Activated naive CD4-positive, alpha-beta T cell treated with anti-CD3 and anti-CD28 coated beads for 36 hours (primary cell): ENCODE measurements at regions of chr5 and their contacts with region 1.

Region 1: DNA sequence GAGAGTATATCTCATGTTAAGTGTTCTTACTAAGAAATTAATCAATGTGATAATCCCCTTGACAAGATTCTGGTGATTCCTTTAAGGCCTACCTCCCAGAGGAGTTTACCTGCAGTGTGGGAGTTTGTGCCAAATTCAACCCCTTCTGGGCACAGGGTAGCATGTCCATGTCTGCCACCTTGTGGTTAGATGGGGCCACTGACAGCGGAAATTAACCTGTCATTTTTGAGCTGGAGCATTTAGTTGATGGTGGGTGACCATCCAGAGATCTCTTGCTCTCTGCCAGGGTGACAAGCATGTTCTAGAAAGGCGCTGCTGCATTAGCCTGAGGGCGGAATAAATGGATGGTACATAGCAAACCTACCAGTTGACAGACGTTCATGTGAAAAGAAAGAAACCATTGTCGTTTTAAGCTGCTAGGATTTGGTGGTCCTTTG is 132.2 kb downstream of the FBXO4 start:
- DNase-seq: peak; percentile 69
- H3K4me3 Mint-ChIP-seq: no peak overlapping the region
- H3K27ac Mint-ChIP-seq: no peak overlapping the region
- H3K4me1 Mint-ChIP-seq: no peaks in the 10 kb centered on the region
- H3K27me3 Mint-ChIP-seq: no peaks in the 10 kb centered on the region

Region 2: DNA sequence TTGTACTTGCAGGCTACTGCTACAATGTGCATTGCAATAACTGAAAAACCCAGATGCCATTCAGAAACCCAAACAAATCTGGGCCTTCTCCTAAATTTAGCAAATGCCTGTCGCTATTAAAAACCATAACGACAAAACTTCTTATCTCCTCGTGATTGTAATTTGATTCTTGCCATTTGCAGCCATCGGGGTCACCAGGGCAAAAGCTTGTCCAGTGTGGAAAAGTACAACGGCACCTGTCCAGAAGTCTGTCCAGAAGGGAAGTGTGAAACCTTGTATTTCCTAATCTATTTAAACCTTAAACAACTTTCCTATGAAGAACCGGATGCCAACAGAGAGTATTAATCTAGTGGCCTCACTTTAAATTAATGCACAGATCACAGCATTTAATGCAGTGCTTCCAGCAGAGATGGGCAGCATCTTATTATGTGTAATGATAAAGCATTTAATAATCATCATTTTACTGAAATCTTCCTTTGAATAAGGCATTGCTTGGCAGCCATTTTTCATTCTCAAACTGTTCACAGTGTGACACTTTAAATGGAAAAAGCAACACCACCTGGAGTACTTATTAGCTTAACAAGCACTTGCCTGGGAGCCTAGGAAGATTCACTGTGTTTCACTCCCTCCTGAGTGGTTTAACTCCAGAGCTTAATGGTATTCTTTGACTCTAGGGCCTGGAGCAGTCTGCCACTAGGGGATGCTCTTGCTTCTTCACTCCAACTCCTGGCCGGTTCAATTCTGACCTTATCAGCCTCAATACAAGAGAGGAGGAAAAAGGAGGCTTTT is 1152.9 kb before region 1 on chr5:
- CTCF ChIA-PET with region 1: no interaction called
- intact Hi-C with region 1: loop called (anchors 5 kb)
- DNase-seq: peak; percentile 62
- H3K4me3 Mint-ChIP-seq: no peak overlapping the region
- H3K27ac Mint-ChIP-seq: no peak overlapping the region
- H3K4me1 Mint-ChIP-seq: no peaks in the 10 kb centered on the region
- H3K27me3 Mint-ChIP-seq: no peaks in the 10 kb centered on the region

Region 3: DNA sequence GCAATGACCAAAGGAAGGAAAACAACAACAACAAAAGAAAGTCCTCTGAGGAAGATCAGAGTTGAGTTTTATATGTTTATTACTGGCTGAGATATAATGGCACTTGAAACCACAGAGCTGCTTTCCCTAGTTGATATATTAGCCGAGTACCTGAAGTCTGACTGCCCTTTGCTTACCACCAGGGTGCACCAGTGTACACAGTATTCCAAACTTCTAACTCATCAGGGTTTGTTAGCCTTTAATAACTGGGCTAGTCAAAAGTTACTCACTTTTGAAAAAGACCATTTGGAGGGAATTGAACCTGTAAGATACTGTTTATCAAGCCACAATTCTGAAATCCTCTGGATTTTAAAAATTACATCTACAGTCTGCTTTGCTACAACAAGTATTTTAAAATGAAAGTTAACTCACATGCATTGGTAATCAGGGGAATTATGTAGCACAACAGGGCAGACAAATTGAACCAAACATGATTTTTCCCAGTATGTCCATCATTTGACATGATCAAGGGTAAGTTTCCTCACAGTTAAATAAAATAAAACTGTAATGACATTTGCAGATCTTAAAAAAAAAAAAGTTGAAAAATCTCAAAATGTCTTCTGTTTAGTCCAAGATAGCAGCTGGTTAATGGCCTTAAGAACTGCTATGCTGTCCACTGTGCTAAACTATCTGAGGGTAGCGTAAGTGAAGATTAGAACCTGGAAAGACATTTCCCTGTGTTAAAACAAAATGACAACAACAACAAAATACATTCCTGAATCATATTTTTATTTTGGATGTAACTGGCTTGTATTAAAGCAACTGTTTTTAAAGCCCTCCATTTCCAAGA is 786.6 kb before region 1 on chr5:
- CTCF ChIA-PET with region 1: no interaction called
- intact Hi-C with region 1: loop called (anchors 2 kb)
- DNase-seq: peak; percentile 12
- H3K4me3 Mint-ChIP-seq: no peak overlapping the region
- H3K27ac Mint-ChIP-seq: no peak overlapping the region
- H3K4me1 Mint-ChIP-seq: no peaks in the 10 kb centered on the region
- H3K27me3 Mint-ChIP-seq: no peaks in the 10 kb centered on the region

Region 4: DNA sequence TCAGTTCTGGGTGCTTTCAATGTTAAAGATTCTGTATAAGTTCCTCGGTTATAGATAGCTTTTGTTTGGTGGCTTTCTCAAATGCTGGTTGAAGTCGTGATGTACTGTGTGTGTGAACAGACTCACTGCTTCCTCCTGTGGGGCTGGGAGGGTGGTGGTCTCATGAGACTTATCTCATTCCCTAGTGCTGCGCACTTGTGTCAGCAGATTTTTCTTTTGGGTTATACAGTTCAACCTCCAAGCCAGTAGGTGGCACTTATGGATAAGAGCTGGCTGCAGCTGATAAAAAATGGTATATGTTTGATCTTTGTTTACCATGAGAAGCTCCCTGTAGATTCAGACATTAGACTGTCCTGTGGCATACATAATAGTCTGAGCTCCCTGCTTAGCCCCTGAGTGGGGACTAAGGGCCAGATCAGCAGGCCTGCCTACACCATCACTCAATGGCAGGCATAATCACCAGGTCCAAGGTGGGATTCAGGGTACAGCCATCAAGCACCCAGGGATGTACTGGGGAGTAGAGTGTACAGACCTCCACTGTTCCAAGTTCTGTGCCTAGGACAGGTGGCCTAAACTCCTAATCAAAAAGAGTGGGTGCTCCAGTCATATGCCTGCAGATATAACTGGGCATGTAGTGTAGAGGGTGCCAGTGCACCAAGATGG is 361.2 kb before region 1 on chr5:
- CTCF ChIA-PET with region 1: interaction called, 6 read pairs
- intact Hi-C with region 1: loop called (anchors 1 kb)
- DNase-seq: no peak
- H3K4me3 Mint-ChIP-seq: no peak overlapping the region
- H3K27ac Mint-ChIP-seq: no peak overlapping the region
- H3K4me1 Mint-ChIP-seq: no peaks in the 10 kb centered on the region
- H3K27me3 Mint-ChIP-seq: peaks cover 24% of the 10 kb centered on the region

Region 5: DNA sequence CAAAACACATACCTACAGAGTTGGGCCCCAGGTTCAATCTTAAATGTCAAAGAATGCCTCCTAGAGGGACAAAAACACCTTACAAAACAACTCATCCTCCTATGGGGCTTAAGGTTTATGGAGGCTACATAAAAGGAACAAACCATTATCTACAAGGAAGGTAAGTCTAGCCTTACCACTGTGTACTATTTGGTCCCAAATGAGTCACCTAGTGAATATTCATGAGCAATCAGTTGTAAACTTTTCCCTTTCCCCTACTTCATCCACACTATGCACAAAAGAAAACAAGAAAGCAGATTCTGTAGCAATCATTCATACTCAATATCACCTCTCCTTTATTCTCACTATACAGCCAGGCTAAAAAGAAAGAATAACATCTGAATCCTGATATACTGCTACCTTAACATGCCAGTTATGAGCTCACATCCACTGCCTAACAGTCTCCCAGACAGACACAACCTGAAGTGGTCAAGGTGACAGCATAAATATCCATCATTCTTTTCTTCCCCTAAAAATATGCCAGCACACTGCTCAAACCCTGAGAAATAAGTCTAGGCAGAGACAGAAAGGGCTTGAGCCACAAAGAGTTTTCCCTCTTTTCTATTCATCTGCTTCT is 193.3 kb before region 1 on chr5:
- CTCF ChIA-PET with region 1: interaction called, 16 read pairs
- intact Hi-C with region 1: no loop called
- DNase-seq: no peak
- H3K4me3 Mint-ChIP-seq: peak overlapping the region; percentile 10
- H3K27ac Mint-ChIP-seq: peak overlapping the region; percentile 76
- H3K4me1 Mint-ChIP-seq: peaks cover 64% of the 10 kb centered on the region
- H3K27me3 Mint-ChIP-seq: no peaks in the 10 kb centered on the region

Region 6: DNA sequence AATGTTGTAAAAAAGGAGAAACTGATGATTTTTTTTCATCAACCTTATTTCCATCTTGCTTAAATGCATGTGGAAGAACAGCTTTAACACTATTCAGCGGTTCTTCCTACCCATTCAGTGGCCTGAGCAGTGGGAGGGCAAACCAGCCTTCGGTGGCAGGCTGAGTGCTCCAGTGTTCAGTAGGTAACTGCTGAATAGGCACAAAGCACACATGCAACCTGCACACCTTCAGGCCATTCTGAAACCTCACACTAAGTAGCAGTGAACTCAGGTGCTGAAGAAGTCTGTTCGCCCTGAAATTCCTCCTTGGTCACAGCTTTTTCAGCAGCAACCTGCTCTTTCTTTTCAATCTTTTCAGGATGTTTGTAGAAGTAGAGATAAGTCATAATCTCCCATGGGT is 106.0 kb before region 1 on chr5:
- CTCF ChIA-PET with region 1: no interaction called
- intact Hi-C with region 1: no loop called
- DNase-seq: no peak
- H3K4me3 Mint-ChIP-seq: no peak overlapping the region
- H3K27ac Mint-ChIP-seq: no peak overlapping the region
- H3K4me1 Mint-ChIP-seq: no peaks in the 10 kb centered on the region
- H3K27me3 Mint-ChIP-seq: peaks cover 8% of the 10 kb centered on the region

Region 7: DNA sequence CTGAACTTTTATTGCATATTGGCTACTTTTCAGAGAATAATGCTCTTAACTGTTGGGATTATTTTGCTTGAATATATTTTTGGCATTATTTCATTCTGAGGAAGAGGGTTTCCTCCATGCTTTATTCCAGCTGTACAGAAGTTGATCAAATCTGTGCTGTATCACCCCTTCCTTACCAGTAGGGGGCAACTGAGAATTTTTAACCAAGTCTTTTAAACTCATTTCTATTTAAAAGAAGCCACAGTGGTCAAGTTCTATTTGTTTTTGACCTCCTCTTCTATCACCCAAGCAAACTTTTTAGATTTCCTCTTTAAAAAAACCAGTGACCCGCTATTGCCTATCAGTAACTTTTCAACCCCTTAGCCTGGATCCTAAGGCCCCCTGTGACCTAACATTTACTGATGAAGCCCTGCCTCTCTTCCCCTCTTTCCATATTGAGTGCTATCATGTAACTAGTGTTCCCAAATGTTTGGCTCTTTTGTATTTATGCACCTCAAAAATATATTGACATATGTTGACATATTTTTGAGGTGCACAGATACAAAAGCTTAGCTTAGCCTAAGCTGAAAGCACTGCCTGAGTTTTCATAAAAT is 51.6 kb before region 1 on chr5:
- CTCF ChIA-PET with region 1: interaction called, 12 read pairs
- intact Hi-C with region 1: loop called (anchors 5 kb)
- DNase-seq: no peak
- H3K4me3 Mint-ChIP-seq: no peak overlapping the region
- H3K27ac Mint-ChIP-seq: no peak overlapping the region
- H3K4me1 Mint-ChIP-seq: no peaks in the 10 kb centered on the region
- H3K27me3 Mint-ChIP-seq: peaks cover 2% of the 10 kb centered on the region